Aorta (tissue), 5 donors: ENCODE measurements at regions of chr11 and their contacts with region 1.

Region 1: DNA sequence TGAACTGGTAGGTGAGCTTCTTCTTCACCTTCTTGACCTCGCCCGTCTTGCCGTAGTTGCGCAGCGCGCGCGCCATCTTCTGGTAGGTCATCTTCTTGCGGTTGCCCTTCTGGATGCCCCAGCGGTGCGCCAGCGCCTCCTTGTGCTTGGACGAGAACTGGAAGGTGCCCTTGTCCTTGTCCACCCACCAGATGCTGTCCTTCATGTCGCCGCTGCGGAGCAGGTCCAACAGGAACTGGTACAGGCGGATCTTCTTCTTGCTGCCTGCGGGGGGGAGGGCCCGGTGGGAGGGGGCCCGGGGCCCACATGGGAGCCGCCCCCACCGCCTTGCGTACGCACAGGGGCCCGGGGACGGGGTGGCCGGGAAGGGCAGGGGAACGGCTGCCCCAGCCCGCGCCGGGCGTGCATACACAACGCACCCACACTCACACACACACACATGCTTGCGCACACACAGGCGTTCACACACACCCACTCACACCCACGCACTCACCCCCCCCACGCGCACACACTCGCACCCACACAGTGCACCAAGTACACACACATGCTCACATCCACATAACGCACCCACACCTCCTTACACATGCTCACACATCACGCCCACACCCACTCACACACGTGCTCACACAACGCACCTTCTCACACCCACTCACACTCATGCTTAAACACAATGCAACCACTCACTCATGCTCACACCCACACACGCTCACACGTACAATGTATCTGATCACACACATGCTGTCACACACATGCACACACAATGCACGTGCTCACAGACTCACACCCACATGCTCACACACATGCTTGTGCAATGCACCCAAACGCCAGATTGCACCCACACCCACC is 3.0 kb upstream of the MYBPC3 start:
- DNase-seq: peak; percentile 93 to 98
- ATAC-seq: peak; percentile 80
- H3K4me3 ChIP-seq: peak overlapping the region; percentile 24
- H3K27ac ChIP-seq: no peak overlapping the region
- H3K4me1 ChIP-seq: no peaks in the 10 kb centered on the region
- H3K27me3 ChIP-seq: no peaks in the 10 kb centered on the region

Region 2: DNA sequence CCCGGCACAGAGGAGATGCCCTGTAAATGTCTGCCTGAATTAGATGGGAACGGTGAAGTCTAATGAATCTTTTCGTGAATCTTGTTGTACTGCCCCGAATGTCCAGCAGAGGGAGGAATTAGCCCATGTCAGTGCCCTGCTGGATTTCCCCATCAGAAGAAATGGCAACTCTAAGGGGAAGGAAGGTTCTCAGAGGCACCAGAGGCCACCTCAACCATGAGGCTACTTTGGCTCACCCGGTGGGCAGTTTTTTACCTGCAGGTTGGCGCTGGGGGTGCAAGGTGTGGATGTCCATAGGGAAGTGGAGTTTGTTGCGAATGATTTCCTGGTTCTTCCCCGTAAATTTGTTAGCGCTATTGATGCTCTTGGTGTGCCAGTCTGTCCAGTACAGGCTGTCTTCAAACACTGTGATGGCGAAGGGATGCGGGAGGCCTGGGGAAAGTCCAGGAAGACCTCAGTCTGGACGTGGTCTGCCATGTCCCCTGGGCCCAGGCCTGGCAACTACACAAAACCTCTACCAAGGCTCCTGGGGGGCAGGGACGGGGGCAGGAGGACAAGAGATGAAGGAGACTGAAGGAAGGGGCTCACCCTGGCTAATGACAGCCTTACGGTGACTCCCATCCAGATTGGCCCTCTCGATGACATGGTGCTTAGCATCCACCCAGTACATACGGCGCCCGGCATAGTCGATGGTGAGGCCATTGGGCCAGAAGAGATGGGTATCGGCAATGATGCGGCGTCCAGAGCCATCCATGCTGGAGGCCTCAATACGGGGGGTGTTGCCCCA is 465.6 kb before region 1 on chr11:
- intact Hi-C with region 1: loop called (anchors 5 to 10 kb)
- DNase-seq: peak; percentile 66 to 73
- ATAC-seq: peak; percentile 91
- H3K4me3 ChIP-seq: no peak overlapping the region
- H3K27ac ChIP-seq: no peak overlapping the region
- H3K4me1 ChIP-seq: no peaks in the 10 kb centered on the region
- H3K27me3 ChIP-seq: no peaks in the 10 kb centered on the region

Region 3: DNA sequence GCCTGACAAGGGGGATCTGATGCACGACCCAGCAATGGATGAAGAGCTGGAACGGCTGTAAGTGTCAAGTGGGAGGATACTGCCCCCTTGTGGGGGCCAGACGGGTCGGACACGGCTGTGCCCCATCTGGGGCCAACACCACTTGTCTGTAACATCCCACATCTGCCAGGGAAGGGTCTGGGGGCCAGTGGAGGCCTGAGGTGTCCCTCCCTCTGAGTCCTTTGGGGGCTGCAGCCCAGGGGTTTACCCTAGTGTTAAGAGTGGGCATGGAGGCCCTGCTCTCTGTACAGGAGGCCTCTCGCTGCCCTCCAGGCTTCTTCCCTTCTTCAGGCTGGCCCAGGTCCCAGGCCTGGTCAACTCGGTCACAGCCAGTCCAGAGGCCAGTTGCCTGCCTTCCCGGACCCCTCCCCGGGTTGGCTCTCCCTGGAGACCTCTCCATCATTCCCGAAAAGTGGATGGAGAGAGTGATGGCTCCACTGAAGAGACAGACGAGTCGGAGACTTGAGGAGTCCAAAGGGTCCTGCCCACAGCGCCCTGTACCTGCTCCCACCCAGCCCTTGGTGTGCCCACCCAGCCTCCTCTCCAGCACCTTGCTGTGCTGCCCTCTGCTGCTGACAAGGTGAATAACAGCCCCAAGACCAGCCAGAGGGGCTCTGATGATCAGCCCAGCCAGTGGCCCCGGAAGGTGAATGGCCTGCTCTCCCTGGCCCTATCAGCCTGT is 194.2 kb before region 1 on chr11:
- intact Hi-C with region 1: loop called in 1 of 2 experiments (anchors 5 kb)
- DNase-seq: peak in 1 of 2 donors; percentile 87
- ATAC-seq: peak; percentile 73
- H3K4me3 ChIP-seq: no peak overlapping the region
- H3K27ac ChIP-seq: no peak overlapping the region
- H3K4me1 ChIP-seq: no peaks in the 10 kb centered on the region
- H3K27me3 ChIP-seq: no peaks in the 10 kb centered on the region

Region 4: DNA sequence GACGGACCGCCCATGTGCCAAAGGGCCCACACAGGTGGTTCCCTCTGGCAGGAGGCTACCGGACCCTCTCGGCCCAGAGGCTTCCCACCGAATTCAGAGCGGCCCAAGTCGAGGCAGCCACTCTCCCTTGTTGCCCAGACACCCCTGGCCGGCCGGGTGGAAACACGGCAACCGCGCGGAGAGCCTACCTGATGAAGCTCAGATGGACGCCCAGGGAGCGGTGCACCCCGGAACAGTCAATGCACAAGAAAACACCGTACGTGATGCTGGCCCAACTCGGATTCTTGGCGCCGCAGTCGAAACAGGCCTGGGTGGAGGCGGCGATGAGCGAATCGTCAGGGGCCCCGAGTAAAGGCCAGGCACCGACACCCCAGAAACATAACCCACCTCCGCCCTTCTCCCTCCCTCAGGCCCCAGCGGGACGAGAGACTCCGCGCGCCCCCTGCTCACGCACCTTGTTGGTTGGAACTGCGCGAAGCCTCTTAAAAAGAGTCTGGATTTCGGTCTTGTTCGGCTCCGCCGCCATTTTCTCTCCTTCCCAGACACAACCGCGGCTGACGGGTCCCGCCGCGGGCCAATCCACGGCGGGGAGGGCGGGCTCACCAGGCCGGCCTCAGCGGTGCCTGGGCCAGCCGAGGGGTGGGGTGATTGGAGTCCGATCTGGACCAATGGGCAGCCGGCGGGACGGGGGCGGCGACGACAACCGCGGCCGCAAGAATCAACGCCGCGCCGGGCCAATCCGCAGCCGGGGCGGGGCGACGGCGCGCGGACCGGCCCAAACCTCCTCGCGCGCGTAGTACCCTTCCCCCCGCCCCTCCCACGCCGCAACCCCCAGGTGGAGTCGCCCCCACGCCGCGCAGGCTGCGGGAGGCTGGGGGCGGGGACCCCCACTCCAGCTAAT is 178.9 kb before region 1 on chr11 and contains the start of gene ARFGAP2:
- intact Hi-C with region 1: loop called (anchors 2 to 5 kb)
- DNase-seq: peak; percentile 98 to 99
- ATAC-seq: peak; percentile 96
- H3K4me3 ChIP-seq: peak within 1 kb of the TSS; percentile 77 to 78
- H3K27ac ChIP-seq: peak within 1 kb of the TSS; percentile 38 to 92
- H3K4me1 ChIP-seq: no peaks in the 10 kb centered on the region
- H3K27me3 ChIP-seq: no peaks in the 10 kb centered on the region
- total RNA-seq, gene ARFGAP2: 65.8 to 68.2 TPM

Region 5: GRCh38 chr11:47259178-47259977 is 96.1 kb before region 1 on chr11:
- intact Hi-C with region 1: loop called (anchors 2 to 10 kb)
- DNase-seq: peak in 1 of 2 donors; percentile 61
- ATAC-seq: no peak
- H3K4me3 ChIP-seq: no peak overlapping the region
- H3K27ac ChIP-seq: no peak overlapping the region
- H3K4me1 ChIP-seq: no peaks in the 10 kb centered on the region
- H3K27me3 ChIP-seq: no peaks in the 10 kb centered on the region